CD8-positive, alpha-beta memory T cell (primary cell): ENCODE measurements at regions of chr11 and their contacts with region 1.

Region 1: DNA sequence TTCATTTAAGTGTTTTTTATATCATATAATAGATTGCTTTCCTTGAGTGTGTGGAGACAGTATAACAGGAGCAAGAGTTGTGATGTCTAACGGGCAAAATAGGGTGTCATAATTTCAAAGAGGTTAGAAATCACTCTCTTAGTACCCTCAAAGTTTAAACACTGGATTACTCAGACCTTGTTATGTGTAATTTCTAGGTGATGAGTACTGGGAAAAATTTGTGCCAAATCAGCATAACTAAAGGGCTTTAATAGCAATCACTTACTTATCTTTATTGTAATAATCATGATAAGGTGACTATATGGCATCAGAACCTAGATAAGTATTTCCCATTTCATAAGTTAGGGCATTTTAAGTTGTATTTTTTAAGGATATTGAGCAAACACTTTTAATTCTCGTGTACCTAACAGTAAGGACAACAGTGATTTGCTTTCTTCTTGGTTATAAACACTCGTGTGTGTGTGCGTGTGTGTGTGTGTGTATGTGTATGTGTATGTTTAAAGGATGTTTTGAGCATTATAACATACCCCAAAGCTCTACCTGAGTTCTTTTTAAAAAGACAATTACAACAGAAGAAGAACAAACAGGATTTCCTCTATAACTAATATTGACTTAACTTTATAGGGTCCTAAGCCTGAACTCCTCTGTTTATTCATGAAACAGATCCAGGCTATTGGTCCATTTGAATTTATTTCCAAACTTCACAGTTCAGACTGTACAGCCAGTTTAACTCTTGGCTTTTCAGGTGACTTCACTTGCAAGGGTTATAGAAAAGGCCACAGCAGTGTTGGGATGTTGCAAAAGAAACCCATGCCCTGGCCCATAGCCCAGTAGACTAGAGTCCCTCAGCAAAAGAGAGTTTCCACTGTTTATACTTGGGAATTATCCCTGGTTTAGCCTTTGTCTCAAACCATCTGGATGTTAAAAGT is 23.7 kb upstream of the PDE3B start:
- DNase-seq: no peak
- H3K4me3 ChIP-seq: no peak overlapping the region
- H3K4me3 Mint-ChIP-seq: no peak overlapping the region
- H3K27ac ChIP-seq: no peak overlapping the region
- H3K27ac Mint-ChIP-seq: peak overlapping the region in 4 of 8 donors; percentile 23 to 78 (median 45)
- H3K4me1 ChIP-seq: peaks cover 9% of the 10 kb centered on the region
- H3K4me1 Mint-ChIP-seq: peaks cover 29 to 85% (median 46%) of the 10 kb centered on the region in 3 donors
- H3K27me3 ChIP-seq: no peaks in the 10 kb centered on the region
- H3K27me3 Mint-ChIP-seq: no peaks in the 10 kb centered on the region

Region 2: GRCh38 chr11:14636119-14636518 is 16.3 kb after region 1 on chr11:
- CTCF ChIA-PET with region 1: interaction called, 11 read pairs
- POLR2A ChIA-PET with region 1: no interaction called
- DNase-seq: peak in 2 of 5 donors; percentile 30 to 31
- H3K4me3 ChIP-seq: no peak overlapping the region
- H3K4me3 Mint-ChIP-seq: peak overlapping the region; percentile 12 to 46 (median 20)
- H3K27ac ChIP-seq: no peak overlapping the region
- H3K27ac Mint-ChIP-seq: peak overlapping the region; percentile 1 to 83 (median 62)
- H3K4me1 ChIP-seq: peaks cover 53% of the 10 kb centered on the region
- H3K4me1 Mint-ChIP-seq: peaks cover 62 to 74% (median 71%) of the 10 kb centered on the region in 3 donors
- H3K27me3 ChIP-seq: no peaks in the 10 kb centered on the region
- H3K27me3 Mint-ChIP-seq: no peaks in the 10 kb centered on the region